Colonic mucosa (tissue), 4 donors: ENCODE measurements at regions of chr3 and their contacts with region 1.

Region 1: GRCh38 chr3:53938645-53939044 is 47.0 kb upstream of the SELENOK start:
- DNase-seq: peak; percentile 47
- H3K4me3 ChIP-seq: no peak overlapping the region
- H3K27ac ChIP-seq: no peak overlapping the region
- H3K4me1 ChIP-seq: no peaks in the 10 kb centered on the region
- H3K27me3 ChIP-seq: peaks cover 3% of the 10 kb centered on the region
- CTCF ChIP-seq: peak; percentile 71

Region 2: GRCh38 chr3:53834429-53835095 is 104.1 kb before region 1 on chr3:
- intact Hi-C with region 1: no loop called
- DNase-seq: no peak
- H3K4me3 ChIP-seq: no peak overlapping the region
- H3K27ac ChIP-seq: no peak overlapping the region
- H3K4me1 ChIP-seq: no peaks in the 10 kb centered on the region
- H3K27me3 ChIP-seq: no peaks in the 10 kb centered on the region
- CTCF ChIP-seq: no peak

Region 3: DNA sequence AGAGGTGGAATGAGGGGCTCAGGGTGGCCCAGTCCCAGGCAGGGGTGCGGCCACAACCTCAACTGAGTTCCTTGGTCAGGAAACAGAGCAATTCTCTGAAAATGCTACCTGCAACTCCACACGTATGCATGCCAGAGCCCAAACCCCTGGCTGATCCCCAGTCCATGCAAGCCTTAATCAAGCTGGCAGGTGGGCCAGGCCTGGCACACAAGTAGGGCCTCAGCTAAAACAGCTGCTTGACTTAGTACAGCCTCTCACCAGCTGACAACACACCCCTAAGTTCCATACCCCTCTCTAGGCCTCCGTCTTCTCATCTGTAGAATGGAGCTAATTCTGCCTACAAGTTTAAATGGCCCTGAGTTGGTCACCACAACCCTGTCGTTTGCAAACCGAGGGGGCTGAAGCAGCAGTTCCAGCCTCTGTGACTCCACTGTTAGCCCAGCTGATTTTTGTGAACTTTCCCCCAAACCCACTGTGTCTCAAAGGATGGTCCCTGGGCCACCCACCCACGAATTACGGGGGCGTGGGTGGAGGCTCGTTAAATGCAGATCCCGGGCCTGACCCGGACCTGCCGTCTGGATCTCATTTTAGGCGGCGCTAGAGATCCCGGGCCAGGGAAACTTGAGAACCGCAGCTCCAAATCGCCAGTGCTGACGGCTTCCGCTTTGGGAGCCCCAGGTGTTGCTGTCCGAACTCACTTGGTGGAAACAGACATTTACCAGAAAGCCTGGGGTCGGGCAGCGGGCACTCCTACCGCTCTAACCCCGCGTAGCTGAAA is 93.4 kb before region 1 on chr3:
- intact Hi-C with region 1: no loop called
- DNase-seq: peak; percentile 69
- H3K4me3 ChIP-seq: peak overlapping the region; percentile 83
- H3K27ac ChIP-seq: peak overlapping the region; percentile 92
- H3K4me1 ChIP-seq: peaks cover 8% of the 10 kb centered on the region
- H3K27me3 ChIP-seq: no peaks in the 10 kb centered on the region
- CTCF ChIP-seq: no peak

Region 4: GRCh38 chr3:54146506-54147239 is 208.0 kb after region 1 on chr3:
- intact Hi-C with region 1: loop called (anchors 10 kb)
- DNase-seq: peak; percentile 37
- H3K4me3 ChIP-seq: no peak overlapping the region
- H3K27ac ChIP-seq: no peak overlapping the region
- H3K4me1 ChIP-seq: no peaks in the 10 kb centered on the region
- H3K27me3 ChIP-seq: no peaks in the 10 kb centered on the region
- CTCF ChIP-seq: peak; percentile 51

Region 5: DNA sequence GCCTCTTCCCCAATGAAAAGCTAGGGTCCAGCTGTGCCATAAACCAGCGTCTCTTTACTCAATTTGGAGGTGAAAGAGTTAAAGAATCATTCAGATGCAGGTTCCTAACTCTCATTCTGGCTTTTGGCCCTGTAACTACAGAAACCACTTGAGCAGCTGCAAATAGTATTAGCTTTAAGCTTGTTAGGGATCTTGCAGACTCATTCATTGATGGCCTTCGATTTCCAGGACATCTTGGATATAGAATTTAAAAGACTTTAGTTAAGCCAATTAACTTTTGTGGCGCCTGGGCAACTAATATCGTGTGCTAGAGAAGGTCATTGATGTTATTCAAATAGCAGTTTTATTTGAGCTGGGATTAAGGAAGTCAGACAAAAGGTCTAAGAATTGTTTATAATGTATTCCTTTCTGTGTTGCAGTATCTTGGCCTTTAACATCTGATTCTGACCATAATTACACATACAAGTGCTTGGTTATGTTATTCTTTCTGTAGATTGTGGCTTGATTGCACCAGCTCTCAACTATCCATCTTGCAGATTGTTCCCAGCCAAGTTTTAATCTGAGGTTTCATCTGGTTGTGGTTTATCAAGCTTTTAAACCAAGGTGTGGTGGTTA is 369.0 kb after region 1 on chr3:
- intact Hi-C with region 1: no loop called
- DNase-seq: no peak
- H3K4me3 ChIP-seq: no peak overlapping the region
- H3K27ac ChIP-seq: no peak overlapping the region
- H3K4me1 ChIP-seq: no peaks in the 10 kb centered on the region
- H3K27me3 ChIP-seq: no peaks in the 10 kb centered on the region
- CTCF ChIP-seq: no peak

Region 6: DNA sequence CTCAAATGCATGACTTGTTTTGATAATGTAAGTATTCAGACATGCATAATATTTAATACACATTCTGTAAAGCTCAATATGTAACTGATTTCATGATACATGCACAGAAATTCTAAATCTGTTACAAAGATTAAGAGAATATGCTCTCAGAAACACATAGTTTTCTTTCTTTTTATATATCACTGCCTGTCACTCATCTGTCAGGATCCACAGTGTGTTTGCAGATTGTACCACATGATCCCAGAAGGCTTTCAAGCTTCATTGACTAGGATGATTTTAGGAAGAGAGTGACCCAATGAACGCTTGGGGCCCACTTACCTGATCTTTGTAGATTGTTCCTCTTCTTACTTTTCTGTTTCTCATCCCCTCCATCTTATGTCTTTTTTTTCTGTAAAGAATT is 445.6 kb after region 1 on chr3:
- intact Hi-C with region 1: loop called (anchors 10 kb)
- DNase-seq: no peak
- H3K4me3 ChIP-seq: no peak overlapping the region
- H3K27ac ChIP-seq: no peak overlapping the region
- H3K4me1 ChIP-seq: no peaks in the 10 kb centered on the region
- H3K27me3 ChIP-seq: no peaks in the 10 kb centered on the region
- CTCF ChIP-seq: no peak

Region 7: DNA sequence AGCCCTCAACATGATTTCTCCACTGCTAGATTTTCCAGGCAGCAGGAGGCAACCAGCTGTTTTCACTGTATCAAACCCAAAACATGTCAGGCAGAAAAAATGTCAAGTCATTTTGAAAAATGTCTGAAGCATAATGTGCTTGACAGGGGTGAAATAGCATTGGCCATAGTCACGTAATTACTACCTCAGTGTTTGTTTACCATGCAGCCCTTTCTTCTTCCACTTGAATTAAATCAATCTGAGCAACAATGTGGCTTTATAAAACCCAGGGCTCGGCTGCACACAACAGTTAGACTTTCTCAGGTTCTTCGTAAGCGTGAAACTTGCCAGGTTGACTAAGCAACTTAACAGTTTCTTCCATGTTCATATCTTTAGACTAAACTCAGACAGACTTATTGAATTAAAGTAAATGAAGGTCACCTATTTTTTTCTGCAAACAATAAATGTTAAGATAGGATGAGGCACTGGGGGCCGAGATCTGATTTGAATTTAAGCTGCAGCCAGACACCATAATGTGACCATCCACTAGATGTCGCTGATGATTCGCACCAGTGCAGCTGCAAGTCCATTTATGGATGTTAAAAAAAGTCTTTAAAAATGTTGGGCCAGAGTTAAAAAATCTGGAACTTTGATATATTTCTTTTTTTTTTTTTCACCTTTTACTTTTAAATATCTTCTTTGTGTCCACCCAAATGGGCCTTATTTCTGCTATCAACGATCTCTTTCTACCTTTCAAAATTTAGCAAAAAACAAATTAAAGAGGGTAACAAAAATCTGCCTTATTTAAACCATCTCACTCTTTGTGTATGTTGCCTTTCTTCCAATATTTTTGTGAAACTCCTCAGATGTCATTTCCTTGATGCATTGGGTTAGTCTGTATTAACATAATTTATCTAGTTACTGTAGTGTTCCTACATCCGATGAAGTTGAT is 489.6 kb after region 1 on chr3:
- intact Hi-C with region 1: loop called (anchors 5 kb)
- DNase-seq: peak; percentile 60
- H3K4me3 ChIP-seq: no peak overlapping the region
- H3K27ac ChIP-seq: no peak overlapping the region
- H3K4me1 ChIP-seq: no peaks in the 10 kb centered on the region
- H3K27me3 ChIP-seq: no peaks in the 10 kb centered on the region
- CTCF ChIP-seq: peak; percentile 71

Region 8: GRCh38 chr3:54494209-54494608 is 555.6 kb after region 1 on chr3:
- intact Hi-C with region 1: no loop called
- DNase-seq: no peak
- H3K4me3 ChIP-seq: no peak overlapping the region
- H3K27ac ChIP-seq: no peak overlapping the region
- H3K4me1 ChIP-seq: no peaks in the 10 kb centered on the region
- H3K27me3 ChIP-seq: no peaks in the 10 kb centered on the region
- CTCF ChIP-seq: no peak